ENCODE measurements at regions of chr15 and their contacts with region 1.

Region 1: DNA sequence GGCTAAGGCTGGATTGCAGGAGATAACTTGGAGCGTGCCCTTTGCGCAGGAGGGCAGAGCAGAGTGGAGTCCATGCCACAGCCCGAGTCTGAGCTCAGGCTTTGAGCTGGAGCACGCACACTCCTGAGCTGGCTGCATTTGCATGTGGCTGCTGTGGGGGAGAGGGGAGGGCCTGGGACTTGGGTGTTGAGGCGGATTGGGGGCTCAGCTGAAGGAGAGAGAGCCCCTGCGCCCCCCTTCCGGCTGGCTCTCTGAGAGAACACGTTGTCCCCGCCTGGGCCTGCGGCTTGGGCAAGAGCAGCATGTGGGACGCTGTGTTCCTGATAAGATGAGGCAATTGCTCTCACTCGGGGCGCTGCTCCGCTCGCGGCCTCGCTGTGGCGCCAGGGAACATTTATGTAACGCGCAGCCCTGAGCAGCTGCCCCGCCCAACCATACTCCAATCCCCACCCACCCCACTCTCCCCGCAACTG is 39.1 kb downstream of the KLF13 start:
- DNase-seq: peak; percentile 59 to 92 (median 84)
- ATAC-seq: peak; percentile 47
- H3K4me3 ChIP-seq: peak overlapping the region; percentile 32 to 59
- H3K4me3 Mint-ChIP-seq: peak overlapping the region; percentile 81
- H3K27ac ChIP-seq: peak overlapping the region; percentile 68 to 93
- H3K27ac Mint-ChIP-seq: peak overlapping the region; percentile 97
- H3K4me1 ChIP-seq: peaks cover 97% of the 10 kb centered on the region
- H3K4me1 Mint-ChIP-seq: peaks cover 96% of the 10 kb centered on the region
- H3K27me3 ChIP-seq: no peaks in the 10 kb centered on the region
- H3K27me3 Mint-ChIP-seq: no peaks in the 10 kb centered on the region
- CTCF ChIP-seq: peak; percentile 57

Region 2: GRCh38 chr15:31200735-31201151 is 164.9 kb before region 1 on chr15:
- CTCF ChIA-PET with region 1: interaction called, 32 read pairs
- POLR2A ChIA-PET with region 1: interaction called, 3 read pairs
- intact Hi-C with region 1: no loop called
- DNase-seq: peak; percentile 52 to 83 (median 71)
- ATAC-seq: peak; percentile 76
- H3K4me3 ChIP-seq: no peak overlapping the region
- H3K4me3 Mint-ChIP-seq: no peak overlapping the region
- H3K27ac ChIP-seq: no peak overlapping the region
- H3K27ac Mint-ChIP-seq: no peak overlapping the region
- H3K4me1 ChIP-seq: peaks cover 20% of the 10 kb centered on the region
- H3K4me1 Mint-ChIP-seq: peaks cover 20% of the 10 kb centered on the region
- H3K27me3 ChIP-seq: no peaks in the 10 kb centered on the region
- H3K27me3 Mint-ChIP-seq: no peaks in the 10 kb centered on the region
- CTCF ChIP-seq: peak; percentile 51

Region 3: DNA sequence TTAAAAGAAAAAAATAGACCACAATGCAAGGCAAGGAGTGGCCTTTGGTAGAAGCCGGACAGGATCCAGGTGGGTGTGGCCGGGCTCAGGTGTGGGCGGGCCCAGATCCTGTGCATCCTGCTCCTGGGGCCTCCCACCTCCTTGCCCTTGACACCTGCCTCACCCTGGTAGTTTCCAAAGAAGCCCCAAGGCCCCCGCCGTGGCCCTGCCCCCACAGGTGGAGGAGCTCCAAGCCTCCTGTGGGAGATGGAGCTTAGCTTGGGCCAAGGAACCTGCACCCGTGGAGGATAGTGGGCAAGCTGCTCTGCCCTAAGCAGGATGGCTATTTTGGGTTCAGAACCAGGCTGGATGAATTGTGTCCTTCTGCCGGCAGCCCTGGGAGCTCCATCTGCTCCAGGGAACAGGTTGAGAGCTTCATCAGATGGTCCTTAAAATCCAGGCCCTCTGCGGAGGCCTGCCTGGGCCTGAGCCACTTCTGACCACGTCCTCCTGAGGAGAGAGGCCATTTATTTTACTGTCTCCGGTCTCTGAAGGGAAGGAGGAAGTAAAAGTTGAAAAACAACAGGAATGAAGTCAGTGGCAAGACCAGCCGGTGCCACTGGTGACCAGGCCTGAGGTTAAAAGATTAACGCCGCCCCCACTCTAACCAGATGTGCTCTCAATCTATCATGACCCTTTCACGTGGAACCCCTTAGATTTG is 93.0 kb before region 1 on chr15:
- CTCF ChIA-PET with region 1: no interaction called
- POLR2A ChIA-PET with region 1: no interaction called
- intact Hi-C with region 1: no loop called
- DNase-seq: peak in 2 of 9 experiments; percentile 9 to 47
- ATAC-seq: no peak
- H3K4me3 ChIP-seq: no peak overlapping the region
- H3K4me3 Mint-ChIP-seq: no peak overlapping the region
- H3K27ac ChIP-seq: no peak overlapping the region
- H3K27ac Mint-ChIP-seq: peak overlapping the region; percentile 37
- H3K4me1 ChIP-seq: peaks cover 7% of the 10 kb centered on the region
- H3K4me1 Mint-ChIP-seq: peaks cover 51% of the 10 kb centered on the region
- H3K27me3 ChIP-seq: no peaks in the 10 kb centered on the region
- H3K27me3 Mint-ChIP-seq: no peaks in the 10 kb centered on the region
- CTCF ChIP-seq: no peak

Region 4: DNA sequence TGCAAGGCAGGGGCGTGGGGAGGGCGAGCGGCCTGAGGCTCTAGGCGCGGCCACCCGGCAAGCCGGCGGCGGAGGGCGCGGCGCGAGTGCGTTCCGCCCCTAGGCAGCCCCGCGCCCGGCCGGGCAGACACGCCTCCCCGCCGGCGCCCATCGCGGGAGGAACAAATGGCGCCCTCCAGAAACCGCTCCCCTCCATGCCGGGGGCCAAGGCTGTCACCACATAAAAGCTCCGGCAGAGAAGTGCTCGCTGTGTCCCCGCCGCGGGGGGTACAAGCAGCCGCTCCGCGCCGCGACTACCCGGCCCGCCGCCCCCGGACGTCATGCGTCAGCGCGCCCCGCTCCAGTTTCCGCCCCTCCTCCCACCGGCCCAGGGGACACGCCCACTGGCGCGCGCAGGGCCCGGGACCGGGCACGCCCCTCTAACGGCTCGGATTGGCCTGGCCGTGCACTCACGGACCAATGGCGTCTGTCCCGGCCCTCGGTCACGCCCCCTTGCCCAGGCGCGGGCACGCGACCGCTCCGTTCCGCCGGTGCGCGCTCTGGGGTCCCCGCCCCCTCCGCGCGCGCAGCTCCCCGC is 39.4 kb before region 1 on chr15:
- CTCF ChIA-PET with region 1: interaction called, 22 read pairs
- POLR2A ChIA-PET with region 1: interaction called, 246 read pairs
- intact Hi-C with region 1: loop called (anchors 1 kb)
- DNase-seq: peak; percentile 99 to 100 (median 100)
- ATAC-seq: peak; percentile 73
- H3K4me3 ChIP-seq: peak overlapping the region; percentile 55 to 82
- H3K4me3 Mint-ChIP-seq: peak overlapping the region; percentile 85
- H3K27ac ChIP-seq: peak overlapping the region; percentile 81 to 96
- H3K27ac Mint-ChIP-seq: peak overlapping the region; percentile 97
- H3K4me1 ChIP-seq: peaks cover 43% of the 10 kb centered on the region
- H3K4me1 Mint-ChIP-seq: peaks cover 60% of the 10 kb centered on the region
- H3K27me3 ChIP-seq: no peaks in the 10 kb centered on the region
- H3K27me3 Mint-ChIP-seq: no peaks in the 10 kb centered on the region
- CTCF ChIP-seq: no peak

Region 5: GRCh38 chr15:31352911-31353811 is 12.5 kb before region 1 on chr15:
- CTCF ChIA-PET with region 1: interaction called, 286 read pairs
- POLR2A ChIA-PET with region 1: interaction called, 296 read pairs
- intact Hi-C with region 1: no loop called
- DNase-seq: peak in 6 of 9 experiments; percentile 56 to 88 (median 71)
- ATAC-seq: peak; percentile 61
- H3K4me3 ChIP-seq: peak overlapping the region; percentile 19 to 33
- H3K4me3 Mint-ChIP-seq: peak overlapping the region; percentile 79
- H3K27ac ChIP-seq: peak overlapping the region; percentile 58 to 78
- H3K27ac Mint-ChIP-seq: peak overlapping the region; percentile 97
- H3K4me1 ChIP-seq: peaks cover 100% of the 10 kb centered on the region
- H3K4me1 Mint-ChIP-seq: peaks cover 98% of the 10 kb centered on the region
- H3K27me3 ChIP-seq: no peaks in the 10 kb centered on the region
- H3K27me3 Mint-ChIP-seq: no peaks in the 10 kb centered on the region
- CTCF ChIP-seq: no peak

Region 6: DNA sequence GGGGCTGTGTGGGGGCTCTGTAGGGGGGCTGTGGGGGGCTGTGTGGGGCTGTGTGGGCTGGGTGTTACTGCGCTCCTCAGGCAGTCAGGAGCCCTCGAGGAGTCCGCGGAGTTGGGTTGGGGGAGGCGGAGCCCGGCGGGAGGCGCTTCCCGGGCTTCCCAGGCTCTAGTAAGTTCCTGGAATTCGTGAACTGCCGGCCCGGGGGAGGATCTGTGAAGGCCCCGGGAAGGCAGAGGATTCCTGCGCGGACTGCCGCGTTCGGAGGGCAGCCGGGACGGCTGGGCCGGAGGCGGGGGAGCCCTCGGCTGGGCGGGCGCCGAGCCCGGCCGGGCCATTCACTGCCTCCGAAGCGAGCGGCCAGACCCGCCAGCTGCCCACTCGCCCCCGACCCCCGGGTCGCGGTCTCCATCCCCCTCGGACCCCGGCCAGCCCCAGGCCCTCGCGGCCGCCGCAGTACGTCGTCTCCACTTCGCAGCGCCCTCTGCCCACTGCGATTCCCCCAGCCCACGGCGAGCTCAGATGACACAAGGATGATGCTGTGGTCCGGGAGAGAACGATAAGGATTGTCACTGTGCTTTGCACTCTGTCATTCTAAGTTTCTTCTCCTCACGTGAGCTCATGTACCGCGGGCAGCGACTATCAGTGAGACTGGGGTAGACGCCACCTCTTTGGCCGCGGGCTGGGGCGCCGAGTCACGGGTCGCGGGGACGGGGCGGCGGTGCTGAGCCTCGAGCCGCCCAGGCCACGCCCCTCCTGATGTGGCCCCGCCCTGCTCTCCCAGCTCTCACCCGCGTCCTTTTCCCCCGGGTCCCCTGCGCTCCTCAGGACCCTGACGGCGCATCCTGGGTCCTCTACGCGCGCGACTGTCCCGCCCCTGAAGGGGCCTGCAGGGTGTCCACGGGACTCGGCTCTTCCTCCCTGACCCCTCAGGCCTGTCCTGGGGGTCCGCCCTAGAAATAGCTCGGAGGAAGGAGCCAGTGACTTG is 26.3 kb after region 1 on chr15:
- CTCF ChIA-PET with region 1: interaction called, 7 read pairs
- POLR2A ChIA-PET with region 1: interaction called, 14 read pairs
- intact Hi-C with region 1: loop called (anchors 1 to 2 kb)
- DNase-seq: peak; percentile 62 to 92 (median 86)
- ATAC-seq: peak; percentile 82
- H3K4me3 ChIP-seq: peak overlapping the region; percentile 86 to 95
- H3K4me3 Mint-ChIP-seq: peak overlapping the region; percentile 91
- H3K27ac ChIP-seq: peak overlapping the region; percentile 80 to 81
- H3K27ac Mint-ChIP-seq: peak overlapping the region; percentile 95
- H3K4me1 ChIP-seq: peaks cover 44% of the 10 kb centered on the region
- H3K4me1 Mint-ChIP-seq: peaks cover 61% of the 10 kb centered on the region
- H3K27me3 ChIP-seq: no peaks in the 10 kb centered on the region
- H3K27me3 Mint-ChIP-seq: no peaks in the 10 kb centered on the region
- CTCF ChIP-seq: no peak

Region 7: GRCh38 chr15:31412824-31413223 is 47.1 kb after region 1 on chr15:
- CTCF ChIA-PET with region 1: no interaction called
- POLR2A ChIA-PET with region 1: no interaction called
- intact Hi-C with region 1: no loop called
- DNase-seq: peak in 1 of 9 experiments; percentile 34
- ATAC-seq: no peak
- H3K4me3 ChIP-seq: no peak overlapping the region
- H3K4me3 Mint-ChIP-seq: no peak overlapping the region
- H3K27ac ChIP-seq: no peak overlapping the region
- H3K27ac Mint-ChIP-seq: no peak overlapping the region
- H3K4me1 ChIP-seq: no peaks in the 10 kb centered on the region
- H3K4me1 Mint-ChIP-seq: peaks cover 6% of the 10 kb centered on the region
- H3K27me3 ChIP-seq: no peaks in the 10 kb centered on the region
- H3K27me3 Mint-ChIP-seq: no peaks in the 10 kb centered on the region
- CTCF ChIP-seq: no peak

Region 8: DNA sequence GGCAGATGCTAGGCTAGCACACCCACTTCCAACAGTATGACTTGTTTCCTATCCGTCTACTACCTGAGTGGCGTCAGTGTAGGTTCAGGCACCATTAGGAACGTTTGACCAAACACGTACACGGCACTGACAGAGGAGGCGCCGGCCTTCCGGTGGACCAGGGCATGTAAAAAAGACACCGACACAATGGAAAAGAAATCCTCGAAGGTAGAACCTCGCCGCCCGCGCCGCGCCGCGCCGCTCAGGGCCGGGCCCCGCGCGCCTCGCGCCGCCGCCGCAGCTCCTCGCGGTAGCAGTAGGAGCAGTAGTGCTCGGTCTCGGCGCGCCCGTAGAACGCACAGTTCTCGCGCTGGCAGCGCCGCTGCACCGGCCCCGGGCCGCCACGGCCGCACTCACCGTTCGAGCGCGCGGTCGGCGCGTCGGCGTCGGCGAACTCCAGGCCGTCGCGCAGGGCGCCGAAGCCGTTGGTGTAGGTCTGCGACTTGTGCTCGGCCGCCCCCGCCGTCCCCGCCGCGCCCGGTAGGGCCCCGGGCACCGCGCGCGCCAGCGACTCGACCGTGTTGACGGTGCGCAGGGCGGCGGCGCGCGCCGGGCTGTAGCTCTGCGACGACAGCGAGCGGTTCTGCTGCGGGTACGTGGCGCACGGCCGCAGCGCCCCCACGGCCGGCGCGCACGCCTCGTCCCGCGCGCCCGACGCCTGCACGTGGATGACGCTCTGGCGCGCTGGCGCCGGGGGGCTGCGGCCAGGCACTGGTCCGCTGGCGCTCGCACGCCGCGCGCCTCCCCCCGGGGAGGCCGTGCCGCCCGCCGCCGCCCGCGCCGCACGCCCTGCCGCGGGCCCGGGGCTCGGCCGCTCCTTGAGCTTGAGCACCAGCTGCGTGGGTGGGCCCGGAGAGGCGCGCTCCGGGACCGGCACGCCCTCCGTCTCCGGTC is 117.6 kb after region 1 on chr15:
- CTCF ChIA-PET with region 1: interaction called, 137 read pairs
- POLR2A ChIA-PET with region 1: interaction called, 38 read pairs
- intact Hi-C with region 1: loop called (anchors 1 kb)
- DNase-seq: peak; percentile 15 to 83 (median 60)
- ATAC-seq: peak; percentile 58
- H3K4me3 ChIP-seq: peak overlapping the region; percentile 60 to 67
- H3K4me3 Mint-ChIP-seq: peak overlapping the region; percentile 95
- H3K27ac ChIP-seq: peak overlapping the region in 1 of 2 experiments; percentile 59
- H3K27ac Mint-ChIP-seq: peak overlapping the region; percentile 97
- H3K4me1 ChIP-seq: peaks cover 44% of the 10 kb centered on the region
- H3K4me1 Mint-ChIP-seq: peaks cover 66% of the 10 kb centered on the region
- H3K27me3 ChIP-seq: peaks cover 0 to 3% of the 10 kb centered on the region in 2 experiments
- H3K27me3 Mint-ChIP-seq: no peaks in the 10 kb centered on the region
- CTCF ChIP-seq: no peak

Region 9: DNA sequence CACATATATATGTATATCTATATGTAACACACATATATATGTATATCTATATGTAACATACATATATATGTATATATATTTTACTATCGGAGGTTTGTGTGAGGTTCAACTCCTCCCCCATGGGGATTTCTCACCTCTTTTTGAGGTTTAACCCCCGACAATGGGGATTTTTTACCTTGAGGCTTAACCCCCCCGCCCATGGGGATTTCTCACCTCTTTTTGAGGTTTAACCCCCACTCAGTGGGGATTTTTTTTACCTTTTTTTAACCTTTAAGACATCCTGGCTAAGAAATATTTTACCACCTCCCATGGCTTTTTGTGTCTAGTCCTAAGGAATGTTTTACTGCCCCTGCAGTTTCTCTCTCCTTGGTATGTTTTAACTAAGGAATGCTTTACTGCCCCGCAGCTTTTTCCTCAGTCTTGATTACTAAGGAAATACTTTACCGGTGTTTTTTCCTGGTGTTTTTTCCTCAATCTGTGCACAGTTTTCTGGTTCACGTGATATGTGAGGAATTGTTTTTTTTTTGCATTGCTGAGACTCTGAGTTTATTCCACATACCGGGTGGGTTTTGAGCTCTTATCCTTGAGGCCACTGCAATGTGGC is 146.1 kb after region 1 on chr15:
- CTCF ChIA-PET with region 1: no interaction called
- POLR2A ChIA-PET with region 1: no interaction called
- intact Hi-C with region 1: no loop called
- DNase-seq: peak in 6 of 9 experiments; percentile 29 to 87 (median 54)
- ATAC-seq: peak; percentile 56
- H3K4me3 ChIP-seq: no peak overlapping the region
- H3K4me3 Mint-ChIP-seq: peak overlapping the region; percentile 27
- H3K27ac ChIP-seq: no peak overlapping the region
- H3K27ac Mint-ChIP-seq: no peak overlapping the region
- H3K4me1 ChIP-seq: peaks cover 10% of the 10 kb centered on the region
- H3K4me1 Mint-ChIP-seq: peaks cover 12% of the 10 kb centered on the region
- H3K27me3 ChIP-seq: no peaks in the 10 kb centered on the region
- H3K27me3 Mint-ChIP-seq: peaks cover 2% of the 10 kb centered on the region
- CTCF ChIP-seq: no peak

Measured in CD8-positive, alpha-beta T cell (primary cell).